ENCODE measurements at regions of chr4 and their contacts with region 1.

Region 1: GRCh38 chr4:73653695-73654106 is 33.5 kb upstream of the RASSF6 start:
- DNase-seq: peak in 2 of 9 experiments; percentile 27 to 56
- ATAC-seq: peak; percentile 20
- H3K4me3 ChIP-seq: no peak overlapping the region
- H3K4me3 Mint-ChIP-seq: no peak overlapping the region
- H3K27ac ChIP-seq: no peak overlapping the region
- H3K27ac Mint-ChIP-seq: no peak overlapping the region
- H3K4me1 ChIP-seq: no peaks in the 10 kb centered on the region
- H3K4me1 Mint-ChIP-seq: no peaks in the 10 kb centered on the region
- H3K27me3 ChIP-seq: no peaks in the 10 kb centered on the region
- H3K27me3 Mint-ChIP-seq: peaks cover 4% of the 10 kb centered on the region
- CTCF ChIP-seq: peak; percentile 70

Region 2: DNA sequence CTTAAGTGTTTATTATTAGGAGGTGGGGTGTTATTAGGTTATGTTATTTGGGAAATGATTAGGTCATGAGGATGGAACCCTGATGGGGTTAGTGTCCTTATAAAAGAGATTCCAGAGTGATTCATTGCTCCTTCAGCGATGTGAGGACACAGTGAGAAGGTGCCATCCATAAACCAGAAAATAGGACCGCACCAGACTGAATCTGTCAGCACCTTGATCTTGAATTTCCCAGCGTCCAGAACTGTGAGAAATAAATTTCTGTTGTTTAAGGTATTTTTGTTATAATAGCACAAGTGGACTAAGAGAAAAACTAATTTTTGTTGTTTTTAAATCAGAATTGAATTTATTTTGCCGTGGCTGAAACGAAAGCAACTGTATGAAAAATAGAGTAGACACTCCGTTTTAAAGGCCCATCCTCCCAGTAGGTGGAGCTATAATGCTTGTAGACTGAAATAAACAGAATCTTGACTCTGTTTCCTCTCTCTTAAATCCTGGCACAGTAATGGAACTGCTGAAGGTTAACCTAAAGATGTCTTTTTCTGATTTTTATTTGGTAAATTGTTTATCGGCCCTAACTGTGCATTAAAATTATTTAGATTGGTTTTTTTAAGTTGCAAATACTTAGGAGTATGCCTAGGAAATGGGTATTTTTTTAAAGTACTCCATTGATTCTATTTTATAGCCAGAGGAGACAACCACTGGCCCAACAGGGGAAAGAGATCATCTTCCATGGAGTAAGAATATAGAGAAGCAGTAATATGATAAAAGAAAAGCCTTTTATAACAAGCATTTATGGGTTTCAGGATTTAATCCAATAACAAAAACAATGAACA is 951.5 kb before region 1 on chr4:
- CTCF ChIA-PET with region 1: no interaction called
- POLR2A ChIA-PET with region 1: no interaction called
- intact Hi-C with region 1: loop called (anchors 5 kb)
- DNase-seq: peak in 2 of 9 experiments; percentile 41 to 51
- ATAC-seq: no peak
- H3K4me3 ChIP-seq: peak overlapping the region; percentile 21 to 25
- H3K4me3 Mint-ChIP-seq: peak overlapping the region; percentile 79
- H3K27ac ChIP-seq: no peak overlapping the region
- H3K27ac Mint-ChIP-seq: no peak overlapping the region
- H3K4me1 ChIP-seq: no peaks in the 10 kb centered on the region
- H3K4me1 Mint-ChIP-seq: peaks cover 3% of the 10 kb centered on the region
- H3K27me3 ChIP-seq: no peaks in the 10 kb centered on the region
- H3K27me3 Mint-ChIP-seq: peaks cover 2% of the 10 kb centered on the region
- CTCF ChIP-seq: no peak

Region 3: DNA sequence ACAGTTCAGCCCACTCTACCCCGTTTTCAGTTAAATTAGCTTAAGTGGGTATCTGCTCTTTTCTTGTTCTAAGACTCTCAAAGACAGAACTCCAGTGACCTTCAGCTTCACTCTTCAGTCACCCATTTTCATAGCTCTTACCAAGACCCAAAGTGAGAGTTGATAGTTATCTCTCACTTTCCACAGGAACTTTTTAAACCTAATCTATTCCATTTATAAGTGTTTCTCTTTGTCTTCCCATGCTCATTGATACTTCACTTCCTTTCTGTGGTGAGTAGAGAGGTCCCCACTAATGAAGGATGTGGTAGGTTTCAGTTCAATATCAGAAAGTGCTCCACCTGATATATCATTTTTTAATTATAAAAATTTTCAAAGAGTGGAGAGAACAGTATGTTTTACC is 617.6 kb before region 1 on chr4:
- CTCF ChIA-PET with region 1: no interaction called
- POLR2A ChIA-PET with region 1: no interaction called
- intact Hi-C with region 1: loop called in 1 of 2 experiments (anchors 5 kb)
- DNase-seq: no peak
- ATAC-seq: no peak
- H3K4me3 ChIP-seq: no peak overlapping the region
- H3K4me3 Mint-ChIP-seq: no peak overlapping the region
- H3K27ac ChIP-seq: no peak overlapping the region
- H3K27ac Mint-ChIP-seq: no peak overlapping the region
- H3K4me1 ChIP-seq: no peaks in the 10 kb centered on the region
- H3K4me1 Mint-ChIP-seq: no peaks in the 10 kb centered on the region
- H3K27me3 ChIP-seq: no peaks in the 10 kb centered on the region
- H3K27me3 Mint-ChIP-seq: peaks cover 6% of the 10 kb centered on the region
- CTCF ChIP-seq: no peak

Region 4: GRCh38 chr4:73127839-73128453 is 525.8 kb before region 1 on chr4:
- CTCF ChIA-PET with region 1: no interaction called
- POLR2A ChIA-PET with region 1: no interaction called
- intact Hi-C with region 1: loop called in 1 of 2 experiments (anchors 10 kb)
- DNase-seq: peak in 4 of 9 experiments; percentile 6 to 46 (median 32)
- ATAC-seq: peak; percentile 93
- H3K4me3 ChIP-seq: no peak overlapping the region
- H3K4me3 Mint-ChIP-seq: no peak overlapping the region
- H3K27ac ChIP-seq: no peak overlapping the region
- H3K27ac Mint-ChIP-seq: no peak overlapping the region
- H3K4me1 ChIP-seq: no peaks in the 10 kb centered on the region
- H3K4me1 Mint-ChIP-seq: peaks cover 2% of the 10 kb centered on the region
- H3K27me3 ChIP-seq: no peaks in the 10 kb centered on the region
- H3K27me3 Mint-ChIP-seq: no peaks in the 10 kb centered on the region
- CTCF ChIP-seq: no peak

Region 5: DNA sequence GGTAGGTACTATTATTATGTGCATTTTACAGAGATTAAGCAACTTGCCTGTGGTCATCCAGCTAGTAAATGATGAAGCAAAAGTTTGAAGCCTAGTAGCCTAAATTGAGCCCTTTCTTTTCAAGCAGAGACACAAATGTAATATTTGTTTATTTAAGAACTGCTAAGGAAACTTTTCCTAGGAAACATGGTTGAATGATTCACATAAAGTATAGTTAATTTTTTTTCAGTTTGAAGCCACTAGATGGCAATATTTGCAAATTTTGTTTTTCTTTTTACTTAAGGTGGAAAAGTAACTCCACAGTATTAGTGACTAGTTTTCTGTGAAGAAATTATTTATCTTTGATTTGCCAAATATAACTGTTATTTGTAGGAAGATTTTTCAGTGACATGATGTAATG is 342.3 kb before region 1 on chr4:
- CTCF ChIA-PET with region 1: no interaction called
- POLR2A ChIA-PET with region 1: no interaction called
- intact Hi-C with region 1: loop called (anchors 5 kb)
- DNase-seq: no peak
- ATAC-seq: no peak
- H3K4me3 ChIP-seq: no peak overlapping the region
- H3K4me3 Mint-ChIP-seq: no peak overlapping the region
- H3K27ac ChIP-seq: no peak overlapping the region
- H3K27ac Mint-ChIP-seq: no peak overlapping the region
- H3K4me1 ChIP-seq: no peaks in the 10 kb centered on the region
- H3K4me1 Mint-ChIP-seq: no peaks in the 10 kb centered on the region
- H3K27me3 ChIP-seq: no peaks in the 10 kb centered on the region
- H3K27me3 Mint-ChIP-seq: no peaks in the 10 kb centered on the region
- CTCF ChIP-seq: peak; percentile 37

Region 6: DNA sequence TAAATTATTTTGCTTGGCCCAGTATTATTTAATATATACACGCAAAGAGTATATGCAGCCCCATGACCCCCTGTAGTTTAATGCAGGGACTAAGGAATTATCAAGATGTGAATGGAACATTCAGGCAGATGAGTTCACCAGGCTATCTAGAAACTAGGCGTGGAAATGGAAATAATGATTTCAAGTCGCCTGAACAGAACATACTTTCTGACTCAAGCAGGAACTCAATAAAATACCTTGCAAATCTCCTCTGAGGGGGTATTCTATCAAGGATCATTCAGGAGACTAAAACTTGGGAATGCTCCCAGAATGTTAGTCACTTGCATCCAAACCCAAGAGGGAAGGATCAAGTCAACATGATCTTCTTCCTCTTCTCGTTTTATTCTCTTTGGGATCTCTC is 26.1 kb after region 1 on chr4:
- CTCF ChIA-PET with region 1: no interaction called
- POLR2A ChIA-PET with region 1: no interaction called
- intact Hi-C with region 1: no loop called
- DNase-seq: no peak
- ATAC-seq: no peak
- H3K4me3 ChIP-seq: no peak overlapping the region
- H3K4me3 Mint-ChIP-seq: no peak overlapping the region
- H3K27ac ChIP-seq: no peak overlapping the region
- H3K27ac Mint-ChIP-seq: no peak overlapping the region
- H3K4me1 ChIP-seq: no peaks in the 10 kb centered on the region
- H3K4me1 Mint-ChIP-seq: no peaks in the 10 kb centered on the region
- H3K27me3 ChIP-seq: no peaks in the 10 kb centered on the region
- H3K27me3 Mint-ChIP-seq: no peaks in the 10 kb centered on the region
- CTCF ChIP-seq: no peak

Measured in CD8-positive, alpha-beta T cell (primary cell).